Ascending aorta (tissue), 2 donors: ENCODE measurements at regions of chr9 and their contacts with region 1.

Region 1: DNA sequence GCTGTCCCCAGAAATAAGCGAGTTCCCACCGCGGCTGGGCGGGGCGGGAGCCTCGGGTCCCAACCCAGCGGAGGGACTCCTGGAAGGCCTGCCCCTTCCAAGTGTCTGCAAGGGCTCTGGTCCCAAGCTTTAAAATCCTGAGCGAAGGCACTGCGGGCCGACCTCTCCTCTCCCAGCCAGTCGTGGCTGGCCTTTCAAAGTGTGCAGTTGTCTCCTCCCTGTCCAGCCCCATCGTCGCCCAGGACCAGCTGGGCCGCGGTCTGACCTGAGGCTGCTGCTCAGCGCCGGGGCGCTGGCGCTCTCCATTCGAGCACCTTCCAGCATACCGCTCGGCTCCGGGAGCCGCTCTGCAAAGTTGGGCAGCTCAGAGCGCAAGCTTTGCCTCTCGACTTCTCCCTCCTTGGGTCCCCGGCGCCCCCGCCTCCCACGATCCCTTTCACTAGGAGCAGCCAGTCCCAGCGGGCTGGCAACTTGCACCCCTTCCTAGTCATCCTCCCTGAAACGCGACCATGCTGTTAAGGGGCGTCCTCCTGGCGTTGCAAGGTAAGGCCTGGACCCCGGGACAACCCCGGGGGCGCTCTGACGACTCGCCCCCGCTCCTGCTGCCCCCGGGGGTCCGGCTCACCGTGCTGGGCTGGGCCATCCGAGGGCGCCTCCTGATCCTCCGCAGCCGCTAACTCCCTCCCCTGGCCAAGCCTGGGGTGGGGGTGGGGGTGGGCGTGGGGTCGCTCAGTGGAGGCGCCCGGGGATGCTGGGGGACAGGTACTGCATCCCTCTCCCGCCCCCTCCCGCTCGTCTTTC is at the start of gene MAMDC2:
- DNase-seq: peak in 1 of 2 donors; percentile 71
- H3K4me3 ChIP-seq: peak within 1 kb of the TSS; percentile 62 to 85
- H3K27ac ChIP-seq: peak within 1 kb of the TSS; percentile 56 to 61
- H3K4me1 ChIP-seq: peaks cover 7 to 21% of the 10 kb centered on the region in 2 donors
- H3K27me3 ChIP-seq: no peaks in the 10 kb centered on the region
- CTCF ChIP-seq: no peak
- total RNA-seq, gene MAMDC2: 3.4 TPM

Region 2: GRCh38 chr9:69759421-69760277 is 284.2 kb before region 1 on chr9 and contains the start of gene PTAR1:
- intact Hi-C with region 1: loop called (anchors 5 kb)
- DNase-seq: peak; percentile 50 to 94
- H3K4me3 ChIP-seq: peak within 1 kb of the TSS; percentile 92 to 97
- H3K27ac ChIP-seq: peak within 1 kb of the TSS; percentile 97 to 98
- H3K4me1 ChIP-seq: peaks cover 2 to 10% of the 10 kb centered on the region in 2 donors
- H3K27me3 ChIP-seq: no peaks in the 10 kb centered on the region
- CTCF ChIP-seq: no peak
- total RNA-seq, gene PTAR1: 13.3 TPM

Region 3: GRCh38 chr9:69985971-69986370 is 57.9 kb before region 1 on chr9:
- intact Hi-C with region 1: no loop called
- DNase-seq: no peak
- H3K4me3 ChIP-seq: no peak overlapping the region
- H3K27ac ChIP-seq: no peak overlapping the region
- H3K4me1 ChIP-seq: no peaks in the 10 kb centered on the region
- H3K27me3 ChIP-seq: no peaks in the 10 kb centered on the region
- CTCF ChIP-seq: no peak

Region 4: DNA sequence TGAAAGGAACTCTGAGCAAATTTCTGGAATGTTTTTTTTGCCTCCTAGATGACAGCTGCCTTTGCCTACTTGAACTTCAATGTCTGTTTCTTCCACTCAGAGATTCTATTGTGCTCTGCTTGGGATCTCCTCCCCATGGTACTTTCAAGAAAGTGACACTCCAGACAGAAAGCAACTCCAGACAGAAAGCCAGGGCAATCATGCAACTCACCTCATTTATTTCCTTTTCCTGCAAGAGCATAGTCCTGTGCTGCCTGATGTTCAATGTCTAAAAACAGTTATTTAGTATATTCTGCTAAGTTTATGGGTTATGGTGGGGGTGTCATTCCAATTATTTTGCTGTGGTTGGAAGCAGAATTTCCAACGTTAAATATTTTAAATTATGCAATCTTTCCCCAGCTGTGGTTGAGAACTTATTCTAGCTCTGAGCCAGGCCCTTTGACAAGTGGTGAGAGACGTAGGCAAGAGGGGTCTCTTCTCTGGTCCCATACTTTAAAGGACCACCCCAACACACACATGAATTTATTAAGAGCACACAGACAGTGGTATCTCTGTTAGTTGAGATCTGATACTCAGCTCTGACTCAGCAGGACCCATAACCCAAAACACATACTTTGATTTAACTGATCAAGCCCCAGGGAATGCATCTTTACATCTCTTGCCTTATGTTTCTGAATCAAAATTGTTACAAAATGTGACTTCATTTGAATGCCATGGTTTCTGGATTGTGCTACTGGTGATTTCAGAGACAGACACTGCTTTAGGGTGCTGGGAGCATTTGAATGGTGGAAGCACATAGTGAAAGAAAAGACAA is 39.8 kb before region 1 on chr9:
- intact Hi-C with region 1: no loop called
- DNase-seq: no peak
- H3K4me3 ChIP-seq: no peak overlapping the region
- H3K27ac ChIP-seq: no peak overlapping the region
- H3K4me1 ChIP-seq: no peaks in the 10 kb centered on the region
- H3K27me3 ChIP-seq: no peaks in the 10 kb centered on the region
- CTCF ChIP-seq: no peak

Region 5: DNA sequence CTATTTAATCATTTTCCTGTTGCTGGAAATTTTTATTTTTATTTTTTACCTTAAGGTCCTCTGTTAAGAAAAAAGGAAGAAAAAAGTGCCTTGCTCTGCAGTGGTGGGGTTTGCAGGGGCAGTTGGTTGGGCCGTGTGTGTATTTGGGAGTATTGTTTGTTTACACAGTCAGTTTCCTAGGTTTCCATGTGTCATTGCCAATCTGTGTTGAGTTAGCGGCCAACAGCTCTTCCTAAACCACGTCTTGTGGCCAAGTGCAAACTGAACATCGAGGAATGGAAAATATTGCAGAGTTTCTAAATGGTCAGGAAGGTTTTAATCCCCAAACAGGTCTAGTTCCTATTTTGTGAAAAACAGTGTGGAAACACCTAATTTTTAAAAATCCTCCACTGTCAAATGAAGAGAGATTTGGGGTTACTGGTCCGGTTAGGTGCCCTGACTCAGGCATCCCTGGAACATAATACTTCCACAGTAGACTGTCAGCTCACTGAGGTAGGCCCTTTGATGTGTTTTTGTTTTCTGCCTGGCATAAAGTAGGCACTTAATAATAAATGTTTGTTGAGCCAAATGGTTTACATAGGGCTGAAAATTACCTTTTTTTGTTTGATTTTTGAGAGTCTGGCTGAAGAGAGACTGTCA is 36.7 kb after region 1 on chr9:
- intact Hi-C with region 1: loop called (anchors 5 kb)
- DNase-seq: peak in 1 of 2 donors; percentile 69
- H3K4me3 ChIP-seq: no peak overlapping the region
- H3K27ac ChIP-seq: peak overlapping the region; percentile 52 to 69
- H3K4me1 ChIP-seq: peaks cover 4 to 17% of the 10 kb centered on the region in 2 donors
- H3K27me3 ChIP-seq: no peaks in the 10 kb centered on the region
- CTCF ChIP-seq: no peak

Region 6: GRCh38 chr9:70111042-70111602 is 67.2 kb after region 1 on chr9:
- intact Hi-C with region 1: loop called (anchors 5 kb)
- DNase-seq: peak in 1 of 2 donors; percentile 85
- H3K4me3 ChIP-seq: no peak overlapping the region
- H3K27ac ChIP-seq: no peak overlapping the region
- H3K4me1 ChIP-seq: no peaks in the 10 kb centered on the region
- H3K27me3 ChIP-seq: no peaks in the 10 kb centered on the region
- CTCF ChIP-seq: peak; percentile 74 to 90 (median 79)